AG04450 (cell line): ENCODE measurements at regions of chr1 and their contacts with region 1.

Region 1: DNA sequence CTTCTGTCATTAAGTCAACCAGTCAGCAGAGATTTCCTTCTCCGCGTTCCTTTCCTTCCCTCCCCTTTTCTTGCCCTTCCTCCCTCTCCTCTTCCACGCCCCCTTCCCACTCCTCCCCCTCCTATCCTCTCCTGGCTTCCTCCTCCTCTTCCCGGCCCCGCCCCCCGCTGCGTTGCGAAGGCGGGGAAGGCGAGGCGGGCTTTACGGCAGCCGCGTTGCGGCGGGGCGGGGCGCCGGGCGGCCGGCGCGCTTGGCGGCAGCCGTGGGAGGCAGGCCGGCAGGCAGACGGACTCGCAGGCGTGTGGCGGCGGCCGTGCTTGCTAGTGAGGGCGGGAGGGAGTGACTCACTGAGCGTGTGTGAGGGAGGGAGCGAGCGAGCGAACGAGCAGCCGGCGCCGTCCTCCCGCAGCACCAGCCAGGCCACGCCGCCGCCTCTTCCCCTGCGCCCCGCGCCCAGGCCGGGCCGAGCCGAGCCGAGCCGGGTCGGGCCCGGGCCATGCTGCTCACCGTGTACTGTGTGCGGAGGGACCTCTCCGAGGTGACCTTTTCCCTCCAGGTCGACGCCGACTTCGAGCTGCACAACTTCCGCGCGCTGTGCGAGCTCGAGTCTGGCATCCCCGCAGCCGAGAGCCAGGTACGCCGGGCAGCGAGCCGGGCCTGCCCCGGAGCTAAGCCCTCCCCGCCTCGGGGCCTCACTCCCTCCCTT is at the start of gene DDI2:
- DNase-seq: peak; percentile 92
- H3K4me3 ChIP-seq: peak within 1 kb of the TSS; percentile 94
- H3K27ac ChIP-seq: peak within 1 kb of the TSS; percentile 89
- H3K27me3 ChIP-seq: no peaks in the 10 kb centered on the region
- CTCF ChIP-seq: no peak
- polyA plus RNA-seq, gene DDI2: 7.8 and 8.7 TPM in 2 replicates

Region 2: GRCh38 chr1:15603050-15603965 is 14.0 kb before region 1 on chr1:
- CTCF ChIA-PET with region 1: no interaction called
- POLR2A ChIA-PET with region 1: interaction called, 17 read pairs
- DNase-seq: peak; percentile 87
- H3K4me3 ChIP-seq: peak overlapping the region; percentile 87
- H3K27ac ChIP-seq: peak overlapping the region; percentile 71
- H3K27me3 ChIP-seq: no peaks in the 10 kb centered on the region
- CTCF ChIP-seq: no peak

Region 3: DNA sequence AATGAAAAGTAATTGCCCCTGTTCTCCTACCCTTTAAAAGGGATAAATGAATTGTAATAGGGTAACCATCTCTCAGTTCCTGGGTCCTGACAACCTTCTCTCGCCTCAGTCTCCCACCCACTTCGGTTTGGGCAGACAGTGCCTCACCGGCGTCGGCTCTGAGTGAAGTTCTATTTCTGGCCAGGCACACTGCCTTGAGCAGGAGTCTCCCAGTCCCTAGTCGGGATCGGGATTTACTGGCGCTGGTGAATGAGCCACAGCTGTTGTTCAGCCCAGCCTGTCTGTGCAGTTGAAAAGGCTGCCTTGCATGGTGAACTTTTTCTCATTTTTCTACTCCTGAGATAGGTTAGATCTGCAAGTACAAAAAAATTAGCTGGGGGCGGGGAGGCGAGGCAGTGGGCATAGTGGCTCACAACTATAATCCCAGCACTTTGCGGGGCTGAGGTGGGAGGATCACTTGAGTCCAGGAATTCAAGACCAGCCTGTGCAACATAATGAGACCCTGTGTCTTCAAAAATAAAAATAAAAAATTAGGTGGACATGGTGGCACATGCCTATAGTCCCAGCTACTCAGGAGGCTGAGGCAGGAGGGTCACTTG is 74.2 kb after region 1 on chr1:
- CTCF ChIA-PET with region 1: no interaction called
- POLR2A ChIA-PET with region 1: no interaction called
- DNase-seq: no peak
- H3K4me3 ChIP-seq: no peak overlapping the region
- H3K27ac ChIP-seq: peak overlapping the region; percentile 47
- H3K27me3 ChIP-seq: no peaks in the 10 kb centered on the region
- CTCF ChIP-seq: no peak

Region 4: DNA sequence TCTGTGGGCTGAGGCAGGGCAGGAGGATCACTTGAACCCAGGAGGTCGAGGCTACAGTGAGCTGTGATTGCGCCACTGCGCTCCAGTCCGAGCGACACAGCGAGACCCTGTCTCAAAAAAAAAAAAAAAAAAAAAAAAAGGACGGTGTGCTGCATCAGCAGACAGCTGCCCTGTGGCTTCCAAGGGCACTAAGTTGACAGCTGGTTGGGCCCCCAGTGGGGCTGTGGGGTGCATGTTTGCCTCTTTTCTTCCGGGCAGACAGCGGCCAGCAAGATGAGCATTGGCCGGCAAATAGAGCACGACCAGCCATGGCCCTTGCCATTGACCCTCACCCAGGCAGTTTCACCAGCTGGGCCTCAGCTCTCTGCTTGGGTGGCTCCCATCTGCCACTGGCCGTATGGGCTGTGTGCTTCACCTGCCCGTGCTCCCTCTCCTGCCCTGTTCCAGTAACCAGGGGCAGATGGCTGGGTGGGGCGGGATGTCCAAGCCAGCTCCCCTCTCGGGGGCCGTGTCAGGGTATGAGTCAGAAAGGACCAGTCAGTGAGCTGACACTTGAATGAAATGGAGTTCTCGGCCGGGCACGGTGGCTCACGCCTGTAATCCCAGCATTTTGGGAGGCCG is 106.4 kb after region 1 on chr1:
- CTCF ChIA-PET with region 1: no interaction called
- POLR2A ChIA-PET with region 1: no interaction called
- DNase-seq: no peak
- H3K4me3 ChIP-seq: no peak overlapping the region
- H3K27ac ChIP-seq: no peak overlapping the region
- H3K27me3 ChIP-seq: no peaks in the 10 kb centered on the region
- CTCF ChIP-seq: no peak